Right cardiac atrium (tissue), 5 donors: ENCODE measurements at regions of chr2 and their contacts with region 1.

Region 1: GRCh38 chr2:168956392-168956791 is 55.3 kb downstream of the G6PC2 start:
- DNase-seq: no peak
- ATAC-seq: no peak
- H3K4me3 ChIP-seq: no peak overlapping the region
- H3K27ac ChIP-seq: no peak overlapping the region
- H3K4me1 ChIP-seq: no peaks in the 10 kb centered on the region
- H3K27me3 ChIP-seq: no peaks in the 10 kb centered on the region

Region 2: GRCh38 chr2:169141713-169142352 is 185.4 kb after region 1 on chr2:
- intact Hi-C with region 1: loop called (anchors 5 to 10 kb)
- DNase-seq: peak in 1 of 3 donors; percentile 25
- ATAC-seq: peak; percentile 51 to 66
- H3K4me3 ChIP-seq: no peak overlapping the region
- H3K27ac ChIP-seq: no peak overlapping the region
- H3K4me1 ChIP-seq: no peaks in the 10 kb centered on the region
- H3K27me3 ChIP-seq: no peaks in the 10 kb centered on the region